ENCODE measurements at regions of chr19 and their contacts with region 1.

Region 1: DNA sequence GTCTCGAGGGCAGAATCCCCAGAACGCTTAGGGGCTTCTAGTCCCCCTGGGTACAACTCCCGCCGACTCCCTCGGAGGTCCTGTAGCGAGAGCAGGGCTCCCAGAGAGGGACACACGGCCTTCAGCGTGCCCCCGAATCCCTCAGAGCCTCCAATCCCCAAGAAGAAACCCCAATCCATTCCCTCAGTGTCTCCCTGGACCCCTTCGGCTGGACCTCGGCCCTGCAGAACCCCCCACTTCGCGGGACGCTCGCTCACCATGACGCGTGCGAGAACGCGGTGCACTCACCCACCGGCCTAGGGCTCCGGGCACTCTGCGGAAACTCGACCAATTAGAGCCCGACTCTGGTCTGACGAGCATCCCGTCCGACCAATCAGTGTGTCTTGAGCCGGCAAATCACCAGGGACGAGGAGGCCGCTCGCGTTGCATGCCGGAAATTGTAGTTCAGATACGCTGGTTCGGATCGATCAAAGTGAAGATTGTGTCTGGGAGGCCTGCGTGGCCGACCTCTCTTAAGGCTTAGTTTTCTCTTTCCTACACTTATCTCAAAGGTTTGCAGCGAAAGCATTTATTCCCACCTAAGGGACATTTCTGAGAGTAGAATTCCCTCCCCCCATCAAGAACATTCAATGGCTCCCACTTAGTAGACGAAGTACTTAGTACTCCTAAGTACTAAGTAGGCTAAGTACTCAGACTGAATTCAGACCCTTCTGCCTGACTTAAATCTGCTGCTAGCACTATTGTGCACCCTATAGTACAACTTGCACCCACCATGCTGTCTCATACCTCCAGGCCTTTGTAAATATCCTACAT is at the start of gene TMEM161A:
- DNase-seq: peak; percentile 98
- ATAC-seq: peak; percentile 99 to 100
- total RNA-seq, gene TMEM161A: 19.1 to 21.2 TPM

Region 2: DNA sequence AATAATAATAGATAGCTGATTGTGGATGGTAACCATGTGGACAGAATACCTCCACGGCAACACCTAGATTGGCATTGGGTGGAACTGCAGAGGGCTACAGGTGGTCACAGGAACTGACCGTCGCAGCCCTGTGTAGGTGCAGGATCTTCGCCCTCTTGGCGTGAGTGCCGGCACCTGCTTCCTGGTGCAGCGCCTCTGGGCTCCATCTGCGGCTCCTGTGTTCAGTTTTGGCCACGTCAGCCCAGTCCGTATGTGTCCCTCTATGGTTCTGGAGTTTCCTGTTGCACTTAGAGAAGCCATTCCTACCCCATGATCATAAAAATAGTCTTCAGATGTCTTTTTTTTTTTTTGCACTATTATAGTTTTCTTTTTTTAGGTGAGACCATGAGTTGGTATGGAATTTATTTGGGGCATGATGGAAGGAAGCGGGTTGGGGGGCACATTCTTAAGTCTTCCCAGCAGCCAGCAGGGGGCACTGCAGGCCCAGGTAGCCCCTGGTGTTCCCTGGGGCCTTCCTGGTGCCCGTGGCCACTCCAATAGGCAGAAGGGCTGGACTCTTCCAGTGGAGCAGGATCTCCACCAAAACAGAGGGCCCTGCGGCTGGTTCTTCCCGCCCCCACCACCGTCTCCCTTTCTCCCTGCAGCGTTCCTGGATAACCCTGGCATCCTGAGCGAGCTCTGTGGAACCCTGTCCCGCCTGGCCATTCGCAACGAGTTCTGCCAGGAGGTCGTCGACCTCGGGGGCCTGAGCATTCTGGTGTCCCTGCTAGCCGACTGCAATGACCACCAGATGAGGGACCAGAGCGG is 84.7 kb before region 1 on chr19:
- intact Hi-C with region 1: loop called (anchors 2 to 5 kb)
- DNase-seq: peak; percentile 73
- ATAC-seq: peak; percentile 52 to 72

Region 3: GRCh38 chr19:19059837-19060611 is 78.4 kb before region 1 on chr19:
- intact Hi-C with region 1: loop called in 1 of 2 experiments (anchors 5 kb)
- DNase-seq: no peak
- ATAC-seq: no peak